Left ventricle myocardium inferior (tissue), 1 donor: ENCODE measurements at regions of chr11 and their contacts with region 1.

Region 1: GRCh38 chr11:72573072-72573854 is 101.0 kb downstream of the PDE2A start:
- DNase-seq: no peak
- H3K4me3 ChIP-seq: no peak overlapping the region
- H3K27ac ChIP-seq: no peak overlapping the region
- H3K4me1 ChIP-seq: no peaks in the 10 kb centered on the region
- H3K27me3 ChIP-seq: no peaks in the 10 kb centered on the region
- CTCF ChIP-seq: peak; percentile 63

Region 2: DNA sequence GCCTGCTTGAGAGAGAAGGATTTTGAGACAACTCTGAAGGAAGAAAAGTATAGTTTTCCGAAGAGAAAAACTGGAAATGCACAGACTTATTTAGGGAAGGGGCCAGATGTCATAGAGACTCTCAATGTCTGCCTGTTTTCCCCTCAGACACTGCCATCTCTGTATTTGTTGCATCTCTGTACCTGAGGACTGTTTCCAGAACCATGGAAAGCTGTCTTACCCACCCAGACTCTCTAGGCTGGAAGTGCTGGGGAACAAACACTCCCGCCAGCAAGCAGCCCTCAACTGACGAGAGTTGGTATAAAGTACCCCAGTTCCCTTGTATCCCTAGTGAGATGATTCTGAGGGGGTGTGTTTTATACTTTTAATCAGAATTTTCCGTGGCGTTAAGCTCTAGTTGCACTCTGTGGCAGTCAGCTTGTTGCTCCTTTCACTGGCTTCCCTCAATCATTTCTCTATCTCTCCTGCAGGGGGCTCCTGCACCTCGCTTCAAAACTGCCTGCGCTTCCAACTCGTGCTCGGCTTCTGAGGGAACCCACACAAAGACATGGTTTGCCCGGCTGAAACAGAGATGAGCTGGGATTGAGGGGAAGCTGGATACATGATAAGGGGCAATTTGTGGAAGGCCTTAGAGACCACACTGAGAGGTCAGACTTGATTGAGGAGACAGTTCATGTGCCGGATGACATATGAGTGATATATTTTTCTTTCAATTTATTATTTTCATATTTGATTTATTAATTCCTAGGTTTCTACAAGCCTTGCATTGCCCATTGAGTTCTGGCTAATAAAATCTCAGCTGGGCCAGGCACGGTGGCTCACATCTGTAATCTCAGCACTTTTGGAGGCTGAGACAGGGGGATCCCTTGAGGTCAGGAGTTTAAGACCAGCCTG is 102.0 kb before region 1 on chr11:
- intact Hi-C with region 1: loop called (anchors 10 kb)
- DNase-seq: peak; percentile 45
- H3K4me3 ChIP-seq: no peak overlapping the region
- H3K27ac ChIP-seq: no peak overlapping the region
- H3K4me1 ChIP-seq: peaks cover 3% of the 10 kb centered on the region
- H3K27me3 ChIP-seq: peaks cover 48% of the 10 kb centered on the region
- CTCF ChIP-seq: peak; percentile 84

Region 3: GRCh38 chr11:72511393-72512047 is 61.7 kb before region 1 on chr11:
- intact Hi-C with region 1: no loop called
- DNase-seq: no peak
- H3K4me3 ChIP-seq: no peak overlapping the region
- H3K27ac ChIP-seq: no peak overlapping the region
- H3K4me1 ChIP-seq: no peaks in the 10 kb centered on the region
- H3K27me3 ChIP-seq: peaks cover 8% of the 10 kb centered on the region
- CTCF ChIP-seq: no peak

Region 4: GRCh38 chr11:72668611-72669347 is 95.5 kb after region 1 on chr11:
- intact Hi-C with region 1: no loop called
- DNase-seq: no peak
- H3K4me3 ChIP-seq: no peak overlapping the region
- H3K27ac ChIP-seq: no peak overlapping the region
- H3K4me1 ChIP-seq: peaks cover 18% of the 10 kb centered on the region
- H3K27me3 ChIP-seq: peaks cover 46% of the 10 kb centered on the region
- CTCF ChIP-seq: no peak

Region 5: DNA sequence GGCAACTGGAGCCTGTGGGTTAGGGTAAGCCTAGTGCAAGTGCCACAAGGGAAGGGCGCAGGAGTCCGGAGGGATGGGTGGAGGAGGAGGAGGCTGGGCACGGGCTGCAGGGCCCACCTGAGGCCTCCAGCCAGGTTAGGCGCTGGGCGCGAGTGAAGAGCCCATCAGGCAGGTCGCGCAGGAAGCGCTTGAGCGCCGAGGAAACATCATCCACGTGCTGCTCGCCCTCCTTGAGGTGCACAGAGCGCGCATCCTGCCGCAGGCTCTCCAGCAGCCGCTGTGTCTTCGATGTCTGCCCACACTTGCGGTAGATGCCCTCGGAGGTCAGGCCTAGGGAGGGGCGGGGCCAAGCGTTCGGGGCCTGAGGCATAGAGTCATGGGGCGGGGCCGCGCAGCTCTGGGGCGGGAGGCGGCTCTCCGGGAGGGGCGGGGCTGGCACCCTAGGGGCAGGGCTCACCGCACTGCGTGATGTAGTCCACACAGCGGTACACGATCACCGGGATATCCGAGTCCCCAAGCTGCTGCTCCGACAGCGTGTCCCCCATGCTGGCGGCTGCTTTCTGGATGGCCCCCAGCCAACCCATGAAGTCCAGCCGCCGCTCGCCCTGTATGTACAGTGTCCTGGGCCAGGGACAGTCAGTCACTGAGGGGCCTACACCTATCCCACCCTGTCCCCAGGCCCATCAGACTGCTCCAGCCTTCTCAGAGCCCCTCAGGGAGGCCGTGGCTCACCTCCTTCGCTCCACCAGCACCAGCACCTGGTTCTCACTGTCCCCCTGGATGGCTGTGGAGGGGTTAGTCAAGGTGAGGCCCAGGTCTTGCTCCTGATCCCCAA is 123.8 kb after region 1 on chr11:
- intact Hi-C with region 1: no loop called
- DNase-seq: peak; percentile 71
- H3K4me3 ChIP-seq: no peak overlapping the region
- H3K27ac ChIP-seq: peak overlapping the region; percentile 40
- H3K4me1 ChIP-seq: peaks cover 45% of the 10 kb centered on the region
- H3K27me3 ChIP-seq: no peaks in the 10 kb centered on the region
- CTCF ChIP-seq: no peak